CD8-positive, alpha-beta T cell (primary cell): ENCODE measurements at regions of chr1 and their contacts with region 1.

Region 1: DNA sequence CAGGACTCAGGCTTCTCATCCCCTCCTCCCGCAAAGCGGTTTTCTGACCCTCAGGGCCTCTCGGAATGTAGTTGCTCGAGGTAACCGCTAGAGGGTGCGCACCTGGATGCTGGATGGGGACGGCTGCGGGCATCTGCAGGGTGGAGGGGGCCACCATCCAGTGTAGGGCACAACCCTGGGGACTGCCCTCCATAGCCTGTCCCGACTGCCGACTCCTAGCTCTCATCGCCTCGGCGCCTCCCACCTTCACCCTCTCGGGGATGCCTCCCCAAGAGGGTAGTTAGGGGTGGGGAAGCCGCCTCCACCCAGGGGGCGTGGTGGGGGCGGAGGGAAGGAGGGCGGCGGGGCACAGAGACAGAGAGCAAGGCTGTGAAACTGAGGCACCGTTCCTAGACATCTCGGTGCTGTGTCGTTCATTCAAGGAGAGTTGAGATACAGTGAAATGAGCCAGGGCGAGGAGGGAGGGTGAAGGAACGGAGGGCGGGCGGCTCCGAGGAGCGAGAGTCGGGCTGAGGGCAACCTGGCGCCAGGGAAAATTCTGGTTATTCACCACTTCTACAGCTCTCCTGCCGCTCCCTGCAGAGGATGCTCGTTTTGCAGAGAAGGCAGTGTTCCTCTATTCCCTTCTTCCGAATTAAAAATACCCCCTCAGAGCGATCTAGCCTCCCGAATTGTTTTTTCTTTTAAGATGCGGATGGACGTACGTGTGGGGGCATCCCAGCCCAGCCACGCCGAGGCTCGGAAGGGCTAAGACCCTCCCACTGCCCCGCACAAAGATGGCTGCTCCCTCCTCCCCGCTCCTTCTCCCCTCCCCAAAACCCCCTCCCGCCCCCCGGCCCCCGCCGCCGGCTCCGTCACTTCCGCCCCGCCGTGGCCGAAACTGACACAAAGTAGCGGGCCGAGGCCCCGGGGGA is at the start of gene ATP8B2:
- DNase-seq: peak; percentile 63 to 91 (median 82)
- ATAC-seq: peak; percentile 59
- H3K4me3 ChIP-seq: peak within 1 kb of the TSS; percentile 94 to 98
- H3K4me3 Mint-ChIP-seq: peak within 1 kb of the TSS; percentile 96
- H3K27ac ChIP-seq: peak within 1 kb of the TSS; percentile 69 to 87
- H3K27ac Mint-ChIP-seq: peak within 1 kb of the TSS; percentile 93
- H3K4me1 ChIP-seq: peaks cover 43% of the 10 kb centered on the region
- H3K4me1 Mint-ChIP-seq: peaks cover 47% of the 10 kb centered on the region
- H3K27me3 ChIP-seq: no peaks in the 10 kb centered on the region
- H3K27me3 Mint-ChIP-seq: peaks cover 6% of the 10 kb centered on the region
- CTCF ChIP-seq: peak; percentile 96
- total RNA-seq, gene ATP8B2: 51.1 to 58.4 TPM

Region 2: GRCh38 chr1:154183045-154183915 is 141.6 kb before region 1 on chr1:
- CTCF ChIA-PET with region 1: no interaction called
- POLR2A ChIA-PET with region 1: no interaction called
- intact Hi-C with region 1: loop called (anchors 2 kb)
- DNase-seq: peak; percentile 86 to 96 (median 94)
- ATAC-seq: peak; percentile 75
- H3K4me3 ChIP-seq: peak overlapping the region; percentile 79 to 91
- H3K4me3 Mint-ChIP-seq: peak overlapping the region; percentile 100
- H3K27ac ChIP-seq: peak overlapping the region; percentile 95 to 97
- H3K27ac Mint-ChIP-seq: peak overlapping the region; percentile 95
- H3K4me1 ChIP-seq: peaks cover 42% of the 10 kb centered on the region
- H3K4me1 Mint-ChIP-seq: peaks cover 48% of the 10 kb centered on the region
- H3K27me3 ChIP-seq: no peaks in the 10 kb centered on the region
- H3K27me3 Mint-ChIP-seq: no peaks in the 10 kb centered on the region
- CTCF ChIP-seq: no peak

Region 3: GRCh38 chr1:154272217-154272998 is 52.5 kb before region 1 on chr1 and contains the start of gene HAX1:
- CTCF ChIA-PET with region 1: interaction called, 10 read pairs
- POLR2A ChIA-PET with region 1: no interaction called
- intact Hi-C with region 1: loop called (anchors 1 kb)
- DNase-seq: peak; percentile 91 to 100 (median 94)
- ATAC-seq: peak; percentile 85
- H3K4me3 ChIP-seq: peak within 1 kb of the TSS; percentile 85 to 91
- H3K4me3 Mint-ChIP-seq: peak within 1 kb of the TSS; percentile 94
- H3K27ac ChIP-seq: peak within 1 kb of the TSS; percentile 88 to 92
- H3K27ac Mint-ChIP-seq: peak within 1 kb of the TSS; percentile 98
- H3K4me1 ChIP-seq: peaks cover 22% of the 10 kb centered on the region
- H3K4me1 Mint-ChIP-seq: peaks cover 38% of the 10 kb centered on the region
- H3K27me3 ChIP-seq: no peaks in the 10 kb centered on the region
- H3K27me3 Mint-ChIP-seq: no peaks in the 10 kb centered on the region
- CTCF ChIP-seq: peak; percentile 75
- total RNA-seq, gene HAX1: 56.8 to 58.4 TPM

Region 4: DNA sequence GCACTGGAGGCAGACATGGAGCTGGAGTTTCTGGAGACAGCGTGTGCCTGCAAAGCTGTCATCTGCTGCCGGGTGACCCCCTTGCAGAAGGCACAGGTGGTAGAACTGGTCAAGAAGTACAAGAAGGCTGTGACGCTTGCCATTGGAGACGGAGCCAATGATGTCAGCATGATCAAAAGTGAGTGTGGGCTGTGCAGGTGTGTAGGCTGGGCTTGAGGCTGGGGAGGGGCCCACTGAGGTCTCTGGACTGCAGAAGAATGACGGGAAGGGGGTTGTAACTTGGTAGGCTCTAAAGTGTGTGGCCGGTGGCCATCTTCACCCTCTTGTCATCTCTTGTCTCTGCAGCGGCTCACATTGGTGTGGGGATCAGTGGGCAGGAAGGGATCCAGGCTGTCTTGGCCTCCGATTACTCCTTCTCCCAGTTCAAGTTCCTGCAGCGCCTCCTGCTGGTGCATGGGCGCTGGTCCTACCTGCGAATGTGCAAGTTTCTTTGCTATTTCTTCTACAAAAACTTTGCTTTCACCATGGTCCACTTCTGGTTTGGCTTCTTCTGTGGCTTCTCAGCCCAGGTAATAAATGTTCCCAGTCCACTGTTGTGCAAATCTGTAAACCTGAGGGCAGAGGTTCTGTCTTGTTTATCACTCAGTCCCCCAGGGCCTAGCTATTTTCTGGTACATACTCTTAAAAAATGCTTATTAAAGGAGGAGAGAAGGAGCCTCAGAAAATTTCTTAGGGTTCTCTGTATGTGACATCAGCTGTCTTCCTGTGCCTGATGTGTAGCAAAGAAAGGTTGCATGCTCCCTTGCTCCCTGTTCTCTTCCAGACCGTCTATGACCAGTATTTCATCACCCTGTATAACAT is 20.3 kb after region 1 on chr1:
- CTCF ChIA-PET with region 1: interaction called, 184 read pairs
- POLR2A ChIA-PET with region 1: interaction called, 40 read pairs
- intact Hi-C with region 1: loop called (anchors 1 kb)
- DNase-seq: peak; percentile 59 to 88 (median 81)
- ATAC-seq: peak; percentile 48
- H3K4me3 ChIP-seq: peak overlapping the region; percentile 58 to 66
- H3K4me3 Mint-ChIP-seq: peak overlapping the region; percentile 87
- H3K27ac ChIP-seq: peak overlapping the region; percentile 8 to 77
- H3K27ac Mint-ChIP-seq: peak overlapping the region; percentile 81
- H3K4me1 ChIP-seq: peaks cover 70% of the 10 kb centered on the region
- H3K4me1 Mint-ChIP-seq: peaks cover 80% of the 10 kb centered on the region
- H3K27me3 ChIP-seq: no peaks in the 10 kb centered on the region
- H3K27me3 Mint-ChIP-seq: no peaks in the 10 kb centered on the region
- CTCF ChIP-seq: peak; percentile 66

Region 5: GRCh38 chr1:154607609-154608396 is 282.9 kb after region 1 on chr1 and contains the start of gene ADAR:
- CTCF ChIA-PET with region 1: no interaction called
- POLR2A ChIA-PET with region 1: no interaction called
- intact Hi-C with region 1: loop called in 1 of 2 experiments (anchors 5 kb)
- DNase-seq: peak; percentile 72 to 98 (median 87)
- ATAC-seq: peak; percentile 85
- H3K4me3 ChIP-seq: peak within 1 kb of the TSS; percentile 89 to 90
- H3K4me3 Mint-ChIP-seq: peak within 1 kb of the TSS; percentile 98
- H3K27ac ChIP-seq: peak within 1 kb of the TSS; percentile 92 to 96
- H3K27ac Mint-ChIP-seq: peak within 1 kb of the TSS; percentile 98
- H3K4me1 ChIP-seq: peaks cover 59% of the 10 kb centered on the region
- H3K4me1 Mint-ChIP-seq: peaks cover 73% of the 10 kb centered on the region
- H3K27me3 ChIP-seq: no peaks in the 10 kb centered on the region
- H3K27me3 Mint-ChIP-seq: no peaks in the 10 kb centered on the region
- CTCF ChIP-seq: no peak
- total RNA-seq, gene ADAR: 221 to 238 TPM

Region 6: DNA sequence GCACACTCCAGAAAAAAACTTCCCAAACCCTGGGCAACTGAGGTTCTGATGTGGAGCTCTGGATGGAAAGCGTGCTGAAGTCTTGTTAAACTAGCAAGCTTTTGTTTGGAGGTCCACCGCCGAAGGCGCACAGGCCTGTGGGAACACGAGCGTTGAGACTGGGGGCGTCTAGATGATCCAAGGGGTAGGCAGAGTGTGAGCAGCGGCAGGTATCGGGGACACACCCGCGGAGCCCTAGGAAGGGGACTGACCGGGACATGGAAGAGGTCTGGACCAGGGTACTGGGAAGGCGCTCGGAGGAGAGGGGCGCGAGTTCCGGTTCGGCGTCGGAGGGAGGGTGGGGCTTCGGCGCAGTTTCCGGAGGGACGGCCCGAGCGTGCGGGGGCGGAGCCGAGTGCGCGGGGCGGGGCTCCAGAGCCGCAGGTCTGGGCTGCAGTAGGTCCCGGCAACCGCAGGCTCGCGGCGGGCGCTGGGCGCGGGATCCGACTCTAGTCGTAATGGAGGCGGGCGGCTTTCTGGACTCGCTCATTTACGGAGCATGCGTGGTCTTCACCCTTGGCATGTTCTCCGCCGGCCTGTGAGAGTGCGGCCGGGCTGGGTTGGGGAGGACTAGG is 810.6 kb after region 1 on chr1 and contains the start of gene SLC50A1:
- CTCF ChIA-PET with region 1: no interaction called
- POLR2A ChIA-PET with region 1: no interaction called
- intact Hi-C with region 1: loop called in 1 of 2 experiments (anchors 10 kb)
- DNase-seq: peak; percentile 82 to 96 (median 92)
- ATAC-seq: peak; percentile 84
- H3K4me3 ChIP-seq: peak within 1 kb of the TSS; percentile 93 to 95
- H3K4me3 Mint-ChIP-seq: peak within 1 kb of the TSS; percentile 98
- H3K27ac ChIP-seq: peak within 1 kb of the TSS; percentile 78 to 99
- H3K27ac Mint-ChIP-seq: peak within 1 kb of the TSS; percentile 99
- H3K4me1 ChIP-seq: peaks cover 29% of the 10 kb centered on the region
- H3K4me1 Mint-ChIP-seq: peaks cover 49% of the 10 kb centered on the region
- H3K27me3 ChIP-seq: no peaks in the 10 kb centered on the region
- H3K27me3 Mint-ChIP-seq: no peaks in the 10 kb centered on the region
- CTCF ChIP-seq: no peak
- total RNA-seq, gene SLC50A1: 12.9 to 14.2 TPM